ENCODE measurements at regions of chrX and their contacts with region 1.

Region 1: GRCh38 chrX:49748211-49748956 is 52.6 kb upstream of the PAGE1 start:
- DNase-seq: no peak
- ATAC-seq: no peak
- H3K4me3 ChIP-seq: no peak overlapping the region
- H3K27ac ChIP-seq: no peak overlapping the region
- H3K4me1 ChIP-seq: no peaks in the 10 kb centered on the region
- H3K27me3 ChIP-seq: peaks cover 0 to 27% (median 0%) of the 10 kb centered on the region in 9 donors
- CTCF ChIP-seq: no peak
- POLR2A ChIP-seq: no peak

Region 2: GRCh38 chrX:49291615-49292337 is 456.6 kb before region 1 on chrX:
- intact Hi-C with region 1: loop called in 6 of 10 experiments (anchors 5 to 10 kb)
- DNase-seq: peak in 2 of 5 donors; percentile 46 to 50
- ATAC-seq: peak in 3 of 4 donors; percentile 56 to 80 (median 66)
- H3K4me3 ChIP-seq: no peak overlapping the region
- H3K27ac ChIP-seq: no peak overlapping the region
- H3K4me1 ChIP-seq: peaks cover 0 to 7% (median 0%) of the 10 kb centered on the region in 12 donors
- H3K27me3 ChIP-seq: no peaks in the 10 kb centered on the region
- CTCF ChIP-seq: peak; percentile 40 to 63 (median 54)
- POLR2A ChIP-seq: no peak

Region 3: DNA sequence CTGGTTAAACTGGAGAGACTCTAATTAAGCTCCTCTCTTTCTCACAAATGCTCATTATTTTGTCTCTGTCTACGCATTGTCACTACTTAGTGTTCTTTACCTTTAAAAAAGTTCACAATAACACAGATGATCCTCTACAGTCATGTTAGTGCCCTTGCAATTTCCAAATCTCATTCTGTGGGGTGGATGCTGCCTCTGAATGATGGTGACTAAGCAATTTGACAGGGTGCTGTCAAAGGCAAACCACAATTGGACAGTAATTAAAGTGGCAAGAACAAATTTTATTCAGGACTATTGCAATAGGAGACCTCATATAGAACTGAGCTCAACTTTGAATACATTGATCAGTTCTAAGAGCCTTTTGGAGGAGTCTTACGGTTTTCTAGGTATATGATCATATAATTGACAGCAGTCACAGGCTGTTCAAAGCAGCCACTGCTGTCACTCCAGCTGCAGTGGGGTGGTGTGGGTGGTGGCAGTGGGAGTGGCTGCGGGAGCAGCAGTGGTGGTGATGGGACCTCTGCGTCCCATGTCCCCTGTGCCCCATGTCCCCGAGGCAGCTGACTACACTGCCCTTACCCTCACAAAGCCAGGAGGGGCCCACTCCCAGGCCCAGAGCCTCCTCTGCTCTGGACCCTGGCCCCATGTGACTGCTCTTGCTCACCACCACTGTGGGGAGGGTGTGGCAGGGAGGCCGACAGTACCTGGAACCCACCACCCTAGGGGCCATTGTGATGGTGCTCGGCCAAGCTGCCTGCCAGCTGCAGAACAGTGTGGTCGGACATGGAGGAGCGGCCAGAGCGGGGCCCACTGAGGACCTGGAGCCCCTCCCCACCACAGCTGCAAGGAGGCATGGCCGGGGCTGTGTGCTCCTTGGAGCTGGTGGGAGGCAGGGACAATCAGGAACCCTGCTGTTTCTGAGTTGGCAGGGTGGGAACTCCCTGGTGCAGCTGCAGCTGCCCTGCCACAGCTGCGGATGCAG is 22.2 kb before region 1 on chrX:
- intact Hi-C with region 1: no loop called
- DNase-seq: no peak
- ATAC-seq: no peak
- H3K4me3 ChIP-seq: no peak overlapping the region
- H3K27ac ChIP-seq: no peak overlapping the region
- H3K4me1 ChIP-seq: no peaks in the 10 kb centered on the region
- H3K27me3 ChIP-seq: peaks cover 0 to 11% (median 0%) of the 10 kb centered on the region in 9 donors
- CTCF ChIP-seq: no peak
- POLR2A ChIP-seq: no peak

Region 4: GRCh38 chrX:49878834-49879659 is 130.7 kb after region 1 on chrX and contains the start of gene USP27X:
- intact Hi-C with region 1: no loop called
- DNase-seq: peak; percentile 74 to 85 (median 80)
- ATAC-seq: peak; percentile 88 to 94 (median 93)
- H3K4me3 ChIP-seq: peak within 1 kb of the TSS; percentile 26 to 85 (median 64)
- H3K27ac ChIP-seq: peak within 1 kb of the TSS; percentile 65 to 89 (median 80)
- H3K4me1 ChIP-seq: peaks cover 0 to 8% (median 0%) of the 10 kb centered on the region in 12 donors
- H3K27me3 ChIP-seq: peaks cover 0 to 5% (median 0%) of the 10 kb centered on the region in 9 donors
- CTCF ChIP-seq: peak; percentile 27 to 69 (median 48)
- POLR2A ChIP-seq: peak in 1 of 2 donors; percentile 51
- total RNA-seq, gene USP27X: 0.67 to 4.3 (median 2.2) TPM

Measured in heart left ventricle (tissue), 16 donors.